ENCODE measurements at regions of chrX and their contacts with region 1.

Region 1: DNA sequence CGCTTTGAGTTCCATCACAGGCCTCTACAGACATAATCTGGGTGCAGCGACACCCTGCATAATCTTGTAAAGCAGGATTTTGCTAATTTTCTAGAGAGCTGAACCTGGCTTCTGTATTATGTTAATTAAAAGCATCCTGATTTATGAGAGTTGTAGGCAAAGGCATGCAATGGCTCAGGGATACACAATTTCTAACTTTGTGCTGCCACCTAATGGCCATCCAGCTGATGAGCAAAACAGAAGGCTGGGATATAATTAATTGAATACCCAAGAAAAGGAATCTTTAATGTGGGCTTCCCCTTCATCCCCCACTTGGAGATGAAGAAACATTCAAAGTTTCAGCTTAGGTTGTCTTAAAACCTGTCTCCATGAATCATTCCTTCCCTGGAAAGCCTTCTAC is 78.1 kb downstream of the BMP15 start:
- DNase-seq: no peak
- H3K4me3 ChIP-seq: no peak overlapping the region
- H3K27ac ChIP-seq: no peak overlapping the region
- H3K4me1 ChIP-seq: no peaks in the 10 kb centered on the region
- H3K27me3 ChIP-seq: no peaks in the 10 kb centered on the region
- CTCF ChIP-seq: peak in 2 of 3 experiments; percentile 43 to 47; a peak in 2 of 4 replicates
- EP300 ChIP-seq: no peak
- POLR2A ChIP-seq: no peak
- RAD21 ChIP-seq: peak; percentile 61 to 65

Region 2: GRCh38 chrX:50747471-50747900 is 241.2 kb before region 1 on chrX:
- CTCF ChIA-PET with region 1: interaction called, 11 read pairs
- POLR2A ChIA-PET with region 1: no interaction called
- DNase-seq: no peak
- H3K4me3 ChIP-seq: no peak overlapping the region
- H3K27ac ChIP-seq: no peak overlapping the region
- H3K4me1 ChIP-seq: no peaks in the 10 kb centered on the region
- H3K27me3 ChIP-seq: no peaks in the 10 kb centered on the region
- CTCF ChIP-seq: peak in 2 of 3 experiments; percentile 61 to 75; a peak in 3 of 4 replicates
- EP300 ChIP-seq: no peak
- POLR2A ChIP-seq: no peak
- RAD21 ChIP-seq: peak; percentile 81 to 86

Region 3: GRCh38 chrX:51098046-51098445 is 109.4 kb after region 1 on chrX:
- CTCF ChIA-PET with region 1: no interaction called
- POLR2A ChIA-PET with region 1: no interaction called
- DNase-seq: no peak
- H3K4me3 ChIP-seq: no peak overlapping the region
- H3K27ac ChIP-seq: no peak overlapping the region
- H3K4me1 ChIP-seq: no peaks in the 10 kb centered on the region
- H3K27me3 ChIP-seq: no peaks in the 10 kb centered on the region
- CTCF ChIP-seq: no peak
- EP300 ChIP-seq: no peak
- POLR2A ChIP-seq: no peak
- RAD21 ChIP-seq: no peak